Naive thymus-derived CD4-positive, alpha-beta T cell (primary cell): ENCODE measurements at regions of chr11 and their contacts with region 1.

Region 1: DNA sequence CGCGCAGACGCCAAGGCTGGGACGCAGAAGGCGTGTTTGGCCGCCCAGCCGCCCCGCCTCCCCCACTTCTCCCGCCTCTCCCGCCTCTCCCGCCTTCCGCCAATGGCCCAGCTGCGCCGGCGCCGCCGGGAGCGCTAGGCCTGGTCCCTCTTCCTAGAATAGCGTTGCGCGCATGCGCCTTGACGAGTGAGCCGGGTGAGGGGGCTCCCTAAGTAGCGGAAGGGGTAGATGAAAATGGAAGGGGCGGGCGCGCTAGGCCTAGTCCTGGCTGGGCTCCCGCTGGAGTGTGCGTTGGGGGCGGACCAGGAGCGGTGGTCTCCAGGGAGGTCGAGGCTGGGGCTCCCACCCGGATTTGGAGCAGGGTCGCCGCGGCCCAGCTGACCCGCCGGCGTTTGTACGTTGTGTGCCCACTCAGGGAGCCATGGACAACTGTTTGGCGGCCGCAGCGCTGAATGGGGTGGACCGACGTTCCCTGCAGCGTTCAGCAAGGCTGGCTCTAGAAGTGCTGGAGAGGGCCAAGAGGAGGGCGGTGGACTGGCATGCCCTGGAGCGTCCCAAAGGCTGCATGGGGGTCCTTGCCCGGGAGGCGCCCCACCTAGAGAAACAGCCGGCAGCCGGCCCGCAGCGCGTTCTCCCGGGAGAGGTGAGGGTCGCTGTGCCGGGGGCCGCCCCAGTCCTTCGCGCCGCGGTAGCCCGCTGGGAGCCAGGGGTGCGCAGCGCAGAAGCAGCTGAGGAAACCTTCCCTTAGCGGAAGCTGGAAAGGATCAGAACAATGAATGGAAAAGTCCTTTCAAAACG is at the start of gene AKIP1:
- DNase-seq: peak; percentile 48 to 87 (median 61)
- ATAC-seq: peak; percentile 75
- H3K4me3 ChIP-seq: peak within 1 kb of the TSS; percentile 79
- H3K4me3 Mint-ChIP-seq: peak within 1 kb of the TSS; percentile 86 to 95 (median 92)
- H3K27ac ChIP-seq: peak within 1 kb of the TSS; percentile 71
- H3K27ac Mint-ChIP-seq: peak within 1 kb of the TSS; percentile 58 to 91 (median 78)
- H3K4me1 ChIP-seq: peaks cover 0 to 4% of the 10 kb centered on the region in 2 donors
- H3K4me1 Mint-ChIP-seq: peaks cover 26 to 51% (median 41%) of the 10 kb centered on the region in 7 donors
- H3K27me3 ChIP-seq: no peaks in the 10 kb centered on the region
- H3K27me3 Mint-ChIP-seq: peaks cover 0 to 24% (median 0%) of the 10 kb centered on the region in 5 donors
- total RNA-seq, gene AKIP1: 5.6 to 20.9 (median 11.2) TPM

Region 2: GRCh38 chr11:8682303-8683114 is 228.7 kb before region 1 on chr11 and contains the starts of genes RPL27A and TRIM66:
- CTCF ChIA-PET with region 1: no interaction called
- POLR2A ChIA-PET with region 1: interaction called, 7 read pairs
- intact Hi-C with region 1: loop called (anchors 1 kb)
- DNase-seq: peak; percentile 97 to 100 (median 99)
- ATAC-seq: peak; percentile 98
- H3K4me3 ChIP-seq: peak within 1 kb of the TSS; percentile 73
- H3K4me3 Mint-ChIP-seq: peak within 1 kb of the TSS; percentile 89 to 97 (median 96)
- H3K27ac ChIP-seq: peak within 1 kb of the TSS; percentile 99
- H3K27ac Mint-ChIP-seq: peak within 1 kb of the TSS; percentile 97 to 99 (median 98)
- H3K4me1 ChIP-seq: peaks cover 17% of the 10 kb centered on the region in 2 donors
- H3K4me1 Mint-ChIP-seq: peaks cover 30 to 57% (median 43%) of the 10 kb centered on the region in 7 donors
- H3K27me3 ChIP-seq: no peaks in the 10 kb centered on the region
- H3K27me3 Mint-ChIP-seq: no peaks in the 10 kb centered on the region
- total RNA-seq, gene RPL27A: 758 to 2,116 (median 1,670) TPM
- total RNA-seq, gene TRIM66: 16.0 to 37.6 (median 24.2) TPM

Region 3: DNA sequence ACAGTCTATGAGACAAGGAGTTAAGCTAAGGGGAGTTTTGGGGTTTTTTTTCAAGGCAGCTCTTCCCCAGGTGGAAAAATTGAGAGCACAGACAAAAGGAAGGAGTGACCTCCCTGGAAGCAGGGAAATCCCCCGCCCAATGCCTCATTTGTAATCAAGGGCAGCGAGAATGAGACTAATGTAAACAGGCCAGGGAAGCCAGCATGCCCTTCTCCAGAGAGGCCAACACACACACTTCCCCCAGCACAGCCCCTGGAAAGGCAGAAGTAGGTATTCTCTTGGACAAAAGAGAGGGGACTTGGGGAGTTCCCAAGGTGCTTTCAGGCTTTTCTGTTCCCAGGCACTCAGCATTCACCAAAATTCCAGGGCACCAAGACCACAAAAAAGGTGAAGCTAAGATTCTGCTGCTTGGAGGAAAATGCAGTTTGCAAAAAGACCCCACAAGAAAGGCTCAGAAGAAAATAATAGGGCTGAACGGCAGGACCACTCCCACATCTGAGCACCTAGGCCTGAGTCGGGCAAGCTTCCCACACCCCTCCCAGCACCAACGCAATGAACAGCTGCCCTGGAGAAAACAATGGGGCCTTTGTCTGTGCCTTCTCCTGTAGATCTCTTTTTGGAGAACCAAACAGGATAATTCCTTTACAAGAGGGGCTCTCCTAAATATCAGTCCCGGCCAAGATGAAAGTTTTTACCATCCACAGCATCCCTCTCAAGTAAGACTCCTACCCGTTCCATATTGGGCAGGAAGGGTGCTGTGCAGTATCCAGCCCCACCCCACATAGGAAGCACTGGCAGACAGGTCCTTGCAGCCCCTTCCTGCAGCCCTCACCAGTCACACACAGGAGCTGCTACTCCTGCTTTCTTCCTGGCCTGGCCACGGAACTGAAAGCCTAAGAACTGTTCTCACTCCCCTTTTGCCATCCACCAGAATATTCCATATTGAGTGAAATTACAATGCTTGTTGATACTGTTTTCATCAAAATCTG is 71.0 kb before region 1 on chr11:
- CTCF ChIA-PET with region 1: no interaction called
- POLR2A ChIA-PET with region 1: no interaction called
- intact Hi-C with region 1: loop called in 1 of 2 experiments (anchors 10 kb)
- DNase-seq: peak in 1 of 9 donors; percentile 52
- ATAC-seq: no peak
- H3K4me3 ChIP-seq: no peak overlapping the region
- H3K4me3 Mint-ChIP-seq: no peak overlapping the region
- H3K27ac ChIP-seq: no peak overlapping the region
- H3K27ac Mint-ChIP-seq: no peak overlapping the region
- H3K4me1 ChIP-seq: no peaks in the 10 kb centered on the region
- H3K4me1 Mint-ChIP-seq: peaks cover 0 to 7% (median 0%) of the 10 kb centered on the region in 7 donors
- H3K27me3 ChIP-seq: no peaks in the 10 kb centered on the region
- H3K27me3 Mint-ChIP-seq: peaks cover 5 to 29% (median 7%) of the 10 kb centered on the region in 5 donors

Region 4: GRCh38 chr11:9003573-9004309 is 92.5 kb after region 1 on chr11 and contains the start of gene NRIP3:
- CTCF ChIA-PET with region 1: no interaction called
- POLR2A ChIA-PET with region 1: no interaction called
- intact Hi-C with region 1: loop called (anchors 5 kb)
- DNase-seq: peak; percentile 72 to 86 (median 80)
- ATAC-seq: peak; percentile 89
- H3K4me3 ChIP-seq: peak within 1 kb of the TSS; percentile 32
- H3K4me3 Mint-ChIP-seq: peak within 1 kb of the TSS; percentile 81 to 90 (median 86)
- H3K27ac ChIP-seq: no peak within 1 kb of the TSS
- H3K27ac Mint-ChIP-seq: peak within 1 kb of the TSS; percentile 12 to 87 (median 62)
- H3K4me1 ChIP-seq: peaks cover 8 to 12% of the 10 kb centered on the region in 2 donors
- H3K4me1 Mint-ChIP-seq: peaks cover 13 to 31% (median 20%) of the 10 kb centered on the region in 7 donors
- H3K27me3 ChIP-seq: peaks cover 3 to 8% of the 10 kb centered on the region in 2 donors
- H3K27me3 Mint-ChIP-seq: peaks cover 30 to 56% (median 41%) of the 10 kb centered on the region in 5 donors
- total RNA-seq, gene NRIP3: 0.59 to 11.0 (median 3.4) TPM

Region 5: GRCh38 chr11:9314291-9315036 is 403.2 kb after region 1 on chr11 and contains the start of gene TMEM41B:
- CTCF ChIA-PET with region 1: no interaction called
- POLR2A ChIA-PET with region 1: no interaction called
- intact Hi-C with region 1: loop called in 1 of 2 experiments (anchors 2 kb)
- DNase-seq: peak; percentile 98 to 100 (median 98)
- ATAC-seq: peak; percentile 98
- H3K4me3 ChIP-seq: peak within 1 kb of the TSS; percentile 90
- H3K4me3 Mint-ChIP-seq: peak within 1 kb of the TSS; percentile 97 to 100 (median 99)
- H3K27ac ChIP-seq: peak within 1 kb of the TSS; percentile 88
- H3K27ac Mint-ChIP-seq: peak within 1 kb of the TSS; percentile 96 to 99 (median 98)
- H3K4me1 ChIP-seq: peaks cover 16 to 23% of the 10 kb centered on the region in 2 donors
- H3K4me1 Mint-ChIP-seq: peaks cover 19 to 49% (median 44%) of the 10 kb centered on the region in 7 donors
- H3K27me3 ChIP-seq: no peaks in the 10 kb centered on the region
- H3K27me3 Mint-ChIP-seq: peaks cover 6 to 29% (median 11%) of the 10 kb centered on the region in 5 donors
- total RNA-seq, gene TMEM41B: 33.9 to 73.7 (median 49.0) TPM

Region 6: DNA sequence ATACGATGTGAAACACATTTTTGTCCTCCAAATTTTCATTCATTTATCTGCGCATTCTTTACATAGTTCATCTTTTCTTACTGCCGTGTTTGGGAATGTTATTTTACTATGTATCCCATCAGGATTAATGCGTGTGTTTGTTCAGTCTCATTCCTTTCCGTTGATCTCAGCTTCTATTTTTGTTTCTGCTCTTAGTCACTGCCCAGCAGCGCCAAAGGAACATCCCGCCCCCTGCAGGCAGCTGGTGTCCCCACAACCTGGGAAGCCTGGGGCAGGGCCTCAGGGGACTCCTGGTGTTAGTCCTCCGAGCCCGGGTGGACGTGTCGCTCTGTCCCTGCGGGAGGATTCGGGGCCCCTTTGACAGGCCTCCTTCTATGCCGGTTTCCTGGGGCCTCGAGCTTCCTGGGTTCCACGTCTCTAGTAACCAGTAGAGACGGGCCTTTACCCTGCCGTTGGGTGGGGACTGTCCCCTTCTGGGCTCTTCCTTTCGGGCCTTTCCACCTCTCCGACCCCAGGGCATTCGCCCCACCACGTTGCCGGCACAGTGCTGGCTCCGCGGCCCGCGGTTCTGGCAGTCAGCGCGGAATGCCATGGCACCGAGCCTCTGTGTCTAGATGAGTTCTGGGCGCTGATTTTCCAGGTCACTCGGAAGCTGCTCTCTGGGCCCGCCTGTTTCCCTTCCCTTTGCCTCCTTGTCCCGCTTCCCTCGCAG is 702.0 kb after region 1 on chr11:
- CTCF ChIA-PET with region 1: no interaction called
- POLR2A ChIA-PET with region 1: no interaction called
- intact Hi-C with region 1: loop called (anchors 5 kb)
- DNase-seq: peak; percentile 63 to 88 (median 76)
- ATAC-seq: peak; percentile 70
- H3K4me3 ChIP-seq: peak overlapping the region; percentile 71
- H3K4me3 Mint-ChIP-seq: peak overlapping the region; percentile 94 to 99 (median 96)
- H3K27ac ChIP-seq: peak overlapping the region; percentile 75
- H3K27ac Mint-ChIP-seq: peak overlapping the region; percentile 82 to 98 (median 92)
- H3K4me1 ChIP-seq: peaks cover 0 to 14% of the 10 kb centered on the region in 2 donors
- H3K4me1 Mint-ChIP-seq: peaks cover 9 to 34% (median 18%) of the 10 kb centered on the region in 7 donors
- H3K27me3 ChIP-seq: no peaks in the 10 kb centered on the region
- H3K27me3 Mint-ChIP-seq: no peaks in the 10 kb centered on the region